ENCODE measurements at regions of chr14 and their contacts with region 1.

Region 1: GRCh38 chr14:74612350-74613021 is 449 bp upstream of the LTBP2 start:
- DNase-seq: peak in 8 of 10 donors; percentile 34 to 93 (median 48)

Region 2: DNA sequence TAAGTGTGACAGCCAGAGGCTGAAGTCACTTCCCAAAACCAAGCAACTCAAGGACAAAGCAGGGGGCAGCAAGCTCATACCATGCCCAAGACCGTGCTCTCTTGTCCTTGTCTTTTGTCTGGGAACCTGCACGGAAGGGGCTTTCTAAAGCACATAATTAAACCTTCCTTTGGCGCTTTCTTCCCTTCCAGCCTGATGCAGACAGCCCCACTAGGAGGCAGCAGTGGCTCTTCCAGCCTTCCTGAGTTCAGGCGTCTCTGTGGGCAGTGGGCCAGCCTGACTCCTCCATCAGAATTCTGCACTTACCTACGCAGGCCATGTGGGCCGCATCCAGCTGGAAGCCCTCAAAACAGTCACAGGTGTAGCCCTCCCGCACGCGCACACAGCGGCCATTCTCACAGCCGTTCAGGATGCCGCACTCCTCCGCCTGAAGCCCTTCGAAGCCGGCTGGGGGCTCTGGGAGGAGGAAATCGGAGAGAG is 111.3 kb before region 1 on chr14:
- intact Hi-C with region 1: loop called (anchors 5 kb)
- DNase-seq: peak; percentile 47 to 95 (median 74)

Region 3: DNA sequence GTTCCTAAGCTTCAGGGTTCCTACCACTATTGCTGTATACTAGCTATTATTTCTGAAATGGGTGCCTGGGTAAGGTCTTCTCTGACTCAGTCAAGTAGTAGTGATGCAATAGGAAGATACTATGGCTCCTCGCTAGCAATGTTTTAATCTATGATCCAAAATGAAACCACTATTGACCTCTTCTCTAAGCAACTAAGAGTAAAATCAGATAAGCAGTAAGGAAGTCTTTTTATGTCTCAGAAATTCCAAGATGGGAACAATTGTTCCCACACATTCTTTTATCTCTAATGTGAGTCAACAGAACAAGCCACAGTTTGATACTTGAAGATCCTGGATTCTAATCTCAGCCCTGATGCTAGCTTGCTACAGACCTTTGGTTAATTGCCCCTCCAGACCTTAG is 55.3 kb after region 1 on chr14:
- intact Hi-C with region 1: no loop called
- DNase-seq: no peak

Region 4: GRCh38 chr14:74807853-74808545 is 195.5 kb after region 1 on chr14:
- intact Hi-C with region 1: loop called (anchors 5 kb)
- DNase-seq: no peak